ENCODE measurements at regions of chr3 and their contacts with region 1.

Region 1: GRCh38 chr3:15636003-15636709 is 34.6 kb downstream of the BTD start:
- DNase-seq: peak; percentile 84
- H3K4me3 Mint-ChIP-seq: peak overlapping the region; percentile 54
- H3K27ac Mint-ChIP-seq: peak overlapping the region; percentile 93
- H3K4me1 Mint-ChIP-seq: peaks cover 44% of the 10 kb centered on the region
- H3K27me3 Mint-ChIP-seq: no peaks in the 10 kb centered on the region
- CTCF ChIP-seq: no peak

Region 2: GRCh38 chr3:15647611-15648167 is 11.5 kb after region 1 on chr3:
- CTCF ChIA-PET with region 1: interaction called, 24 read pairs
- POLR2A ChIA-PET with region 1: interaction called, 51 read pairs
- intact Hi-C with region 1: no loop called
- DNase-seq: peak; percentile 81
- H3K4me3 Mint-ChIP-seq: peak overlapping the region; percentile 64
- H3K27ac Mint-ChIP-seq: peak overlapping the region; percentile 93
- H3K4me1 Mint-ChIP-seq: peaks cover 37% of the 10 kb centered on the region
- H3K27me3 Mint-ChIP-seq: no peaks in the 10 kb centered on the region
- CTCF ChIP-seq: no peak

Region 3: GRCh38 chr3:16349986-16350596 is 713.9 kb after region 1 on chr3:
- CTCF ChIA-PET with region 1: no interaction called
- POLR2A ChIA-PET with region 1: no interaction called
- intact Hi-C with region 1: no loop called
- DNase-seq: no peak
- H3K4me3 Mint-ChIP-seq: no peak overlapping the region
- H3K27ac Mint-ChIP-seq: no peak overlapping the region
- H3K4me1 Mint-ChIP-seq: no peaks in the 10 kb centered on the region
- H3K27me3 Mint-ChIP-seq: no peaks in the 10 kb centered on the region
- CTCF ChIP-seq: no peak